MCF 10A (cell line): ENCODE measurements at regions of chr9 and their contacts with region 1.

Region 1: DNA sequence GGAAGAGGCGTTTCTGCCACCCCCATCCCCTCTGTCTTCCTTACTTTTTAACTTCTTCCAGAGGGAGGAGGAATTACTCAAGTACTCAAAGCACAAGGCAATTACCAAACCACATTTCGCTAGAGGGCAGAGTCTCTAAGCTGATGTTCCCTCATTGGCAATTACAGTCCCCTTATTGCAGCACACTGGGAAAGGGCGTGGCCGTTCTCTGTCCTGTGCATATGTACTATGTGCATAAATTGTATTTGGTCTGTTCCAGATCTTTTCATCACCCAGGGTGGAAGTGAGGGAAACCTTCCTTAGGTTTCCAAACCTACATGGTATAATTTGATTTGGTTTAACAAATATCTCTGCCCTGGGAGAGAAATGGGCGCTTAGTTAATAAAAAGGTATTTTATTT is 29.8 kb upstream of the ALDOB start:
- DNase-seq: peak; percentile 94
- H3K4me3 Mint-ChIP-seq: no peak overlapping the region
- H3K27ac Mint-ChIP-seq: no peak overlapping the region
- H3K4me1 Mint-ChIP-seq: peaks cover 21% of the 10 kb centered on the region
- H3K27me3 Mint-ChIP-seq: no peaks in the 10 kb centered on the region
- CTCF ChIP-seq: peak; percentile 49

Region 2: GRCh38 chr9:101449140-101449721 is 16.2 kb before region 1 on chr9:
- CTCF ChIA-PET with region 1: interaction called, 12 read pairs
- POLR2A ChIA-PET with region 1: interaction called, 3 read pairs
- intact Hi-C with region 1: no loop called
- DNase-seq: peak; percentile 75
- H3K4me3 Mint-ChIP-seq: peak overlapping the region; percentile 83
- H3K27ac Mint-ChIP-seq: no peak overlapping the region
- H3K4me1 Mint-ChIP-seq: peaks cover 19% of the 10 kb centered on the region
- H3K27me3 Mint-ChIP-seq: peaks cover 17% of the 10 kb centered on the region
- CTCF ChIP-seq: peak; percentile 64

Region 3: DNA sequence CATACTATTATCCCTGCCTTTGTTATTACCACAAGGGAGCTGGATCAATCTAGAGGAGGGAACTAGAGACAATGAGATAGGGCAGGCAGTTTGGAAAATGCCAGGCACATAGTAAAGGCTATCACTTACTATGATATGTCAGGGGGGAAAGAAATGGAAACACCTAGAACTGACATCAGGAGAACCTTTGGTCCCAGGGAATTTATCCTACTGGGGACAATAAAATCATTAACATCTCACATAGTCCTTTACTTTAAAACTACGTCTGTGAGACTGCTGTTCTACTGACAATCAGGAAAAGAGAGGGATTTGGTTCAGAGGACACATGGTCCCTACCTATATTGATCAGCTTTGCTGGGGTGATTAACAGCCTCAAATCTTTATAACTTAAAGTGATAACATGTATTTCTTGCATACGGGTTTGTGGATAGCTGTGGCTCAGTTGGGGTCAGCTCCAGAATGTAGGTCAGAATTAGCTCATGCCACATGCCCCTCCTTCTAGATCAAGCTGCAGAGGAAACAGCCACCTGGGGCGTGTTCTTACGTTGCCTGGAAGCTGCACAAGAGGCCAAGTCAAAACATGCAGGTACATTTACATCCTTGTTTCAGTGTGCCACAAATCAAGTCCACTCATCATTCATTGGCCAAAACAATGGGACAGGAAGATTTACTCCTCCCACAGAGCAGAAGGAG is 14.1 kb after region 1 on chr9:
- CTCF ChIA-PET with region 1: interaction called, 173 read pairs
- POLR2A ChIA-PET with region 1: interaction called, 92 read pairs
- intact Hi-C with region 1: no loop called
- DNase-seq: peak; percentile 92
- H3K4me3 Mint-ChIP-seq: peak overlapping the region; percentile 44
- H3K27ac Mint-ChIP-seq: peak overlapping the region; percentile 60
- H3K4me1 Mint-ChIP-seq: peaks cover 68% of the 10 kb centered on the region
- H3K27me3 Mint-ChIP-seq: no peaks in the 10 kb centered on the region
- CTCF ChIP-seq: no peak

Region 4: GRCh38 chr9:101486693-101487442 is 21.5 kb after region 1 on chr9:
- CTCF ChIA-PET with region 1: interaction called, 173 read pairs
- POLR2A ChIA-PET with region 1: interaction called, 92 read pairs
- intact Hi-C with region 1: loop called (anchors 1 kb)
- DNase-seq: peak; percentile 71
- H3K4me3 Mint-ChIP-seq: peak overlapping the region; percentile 82
- H3K27ac Mint-ChIP-seq: peak overlapping the region; percentile 92
- H3K4me1 Mint-ChIP-seq: peaks cover 25% of the 10 kb centered on the region
- H3K27me3 Mint-ChIP-seq: no peaks in the 10 kb centered on the region
- CTCF ChIP-seq: peak; percentile 4

Region 5: DNA sequence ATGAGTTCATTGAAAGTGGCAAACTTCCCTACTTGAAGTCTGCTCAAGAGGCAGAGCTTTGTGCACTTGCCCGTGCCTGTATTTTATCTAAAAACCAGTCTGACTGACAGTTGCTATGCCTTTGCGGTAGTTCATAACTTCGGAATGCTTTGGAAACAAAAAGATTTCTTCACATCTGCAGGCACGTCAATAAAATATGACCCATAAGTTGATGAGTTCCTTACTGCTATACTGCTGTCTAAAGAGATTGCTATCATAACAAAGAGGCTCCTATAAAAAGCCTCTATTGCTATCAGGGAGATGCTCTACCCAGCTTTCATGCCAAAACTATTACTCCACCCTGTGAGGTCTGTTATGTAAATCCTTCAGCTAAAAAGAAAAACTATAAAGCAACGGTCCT is 42.8 kb after region 1 on chr9:
- CTCF ChIA-PET with region 1: interaction called, 11 read pairs
- POLR2A ChIA-PET with region 1: no interaction called
- intact Hi-C with region 1: no loop called
- DNase-seq: no peak
- H3K4me3 Mint-ChIP-seq: no peak overlapping the region
- H3K27ac Mint-ChIP-seq: no peak overlapping the region
- H3K4me1 Mint-ChIP-seq: no peaks in the 10 kb centered on the region
- H3K27me3 Mint-ChIP-seq: no peaks in the 10 kb centered on the region
- CTCF ChIP-seq: no peak

Region 6: GRCh38 chr9:101966691-101967090 is 501.3 kb after region 1 on chr9:
- CTCF ChIA-PET with region 1: no interaction called
- POLR2A ChIA-PET with region 1: no interaction called
- intact Hi-C with region 1: no loop called
- DNase-seq: no peak
- H3K4me3 Mint-ChIP-seq: no peak overlapping the region
- H3K27ac Mint-ChIP-seq: no peak overlapping the region
- H3K4me1 Mint-ChIP-seq: no peaks in the 10 kb centered on the region
- H3K27me3 Mint-ChIP-seq: peaks cover 66% of the 10 kb centered on the region
- CTCF ChIP-seq: no peak